ENCODE measurements at regions of chr7 and their contacts with region 1.

Region 1: GRCh38 chr7:44200647-44201461 is at the start of gene YKT6:
- DNase-seq: peak; percentile 65
- H3K4me3 ChIP-seq: peak within 1 kb of the TSS; percentile 100
- H3K27me3 ChIP-seq: no peaks in the 10 kb centered on the region; the same call in 1 of the 2 replicates
- CTCF ChIP-seq: peak; percentile 46
- polyA plus RNA-seq, gene YKT6: 132 and 160 TPM in 2 replicates

Region 2: GRCh38 chr7:44065436-44066118 is 135.3 kb before region 1 on chr7 and contains the start of gene PGAM2:
- CTCF ChIA-PET with region 1: interaction called, 52 read pairs
- POLR2A ChIA-PET with region 1: no interaction called
- DNase-seq: no peak
- H3K4me3 ChIP-seq: no peak within 1 kb of the TSS
- H3K27me3 ChIP-seq: no peaks in the 10 kb centered on the region
- CTCF ChIP-seq: no peak
- polyA plus RNA-seq, gene PGAM2: 0.16 TPM in 1 of 2 replicates, not detected in the other

Region 3: GRCh38 chr7:44072364-44073231 is 128.3 kb before region 1 on chr7:
- CTCF ChIA-PET with region 1: interaction called, 52 read pairs
- POLR2A ChIA-PET with region 1: no interaction called
- DNase-seq: peak; percentile 44
- H3K4me3 ChIP-seq: no peak overlapping the region
- H3K27me3 ChIP-seq: no peaks in the 10 kb centered on the region
- CTCF ChIP-seq: peak; percentile 92

Region 4: GRCh38 chr7:44123190-44124003 is 77.5 kb before region 1 on chr7 and contains the start of gene POLD2:
- CTCF ChIA-PET with region 1: interaction called, 12 read pairs
- POLR2A ChIA-PET with region 1: no interaction called
- DNase-seq: peak; percentile 77
- H3K4me3 ChIP-seq: peak within 1 kb of the TSS; percentile 80
- H3K27me3 ChIP-seq: no peaks in the 10 kb centered on the region
- CTCF ChIP-seq: no peak
- polyA plus RNA-seq, gene POLD2: 54.8 and 87.2 TPM in 2 replicates

Region 5: DNA sequence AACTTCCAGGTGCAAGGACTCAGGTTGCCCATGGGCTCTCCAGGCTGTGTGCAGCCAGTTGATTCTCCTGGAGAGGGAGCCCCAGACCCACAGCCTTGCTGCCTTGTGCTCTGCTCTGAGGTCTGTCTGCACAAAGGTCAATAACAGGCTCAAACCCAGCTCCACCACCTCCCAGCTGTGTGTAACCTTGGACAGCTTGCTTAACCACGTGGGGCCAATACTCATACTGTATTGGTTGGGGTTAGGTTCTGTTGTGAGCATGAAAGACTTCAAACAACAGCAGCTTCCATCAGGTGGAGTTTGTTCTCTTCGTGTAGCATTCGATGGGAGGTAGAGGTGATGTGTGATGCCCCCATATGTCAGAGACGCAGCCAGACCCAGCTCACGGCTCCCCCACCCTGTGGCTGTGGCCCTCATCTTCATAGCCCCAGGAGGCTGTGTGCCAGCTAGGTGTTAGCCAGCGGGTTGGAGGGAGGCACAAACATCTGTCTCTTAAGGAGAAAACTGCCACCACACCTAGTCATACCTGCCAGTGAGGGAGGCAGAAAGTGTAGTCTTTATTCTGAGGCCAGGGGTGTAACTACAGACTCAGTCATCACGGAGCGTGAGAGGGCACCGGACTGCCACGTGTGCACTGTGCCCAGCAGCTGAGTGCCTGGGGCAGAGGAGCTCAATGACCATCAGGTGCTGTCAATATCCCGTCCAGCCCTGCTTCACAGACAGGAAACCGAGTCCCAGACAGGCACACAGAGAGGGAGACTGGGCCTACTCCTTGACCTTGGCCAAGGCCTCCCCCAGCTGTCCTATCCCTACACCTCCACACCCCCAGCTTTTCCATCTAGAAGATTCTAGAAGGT is 69.5 kb before region 1 on chr7:
- CTCF ChIA-PET with region 1: interaction called, 27 read pairs
- POLR2A ChIA-PET with region 1: no interaction called
- DNase-seq: no peak
- H3K4me3 ChIP-seq: no peak overlapping the region
- H3K27me3 ChIP-seq: no peaks in the 10 kb centered on the region
- CTCF ChIP-seq: no peak

Region 6: DNA sequence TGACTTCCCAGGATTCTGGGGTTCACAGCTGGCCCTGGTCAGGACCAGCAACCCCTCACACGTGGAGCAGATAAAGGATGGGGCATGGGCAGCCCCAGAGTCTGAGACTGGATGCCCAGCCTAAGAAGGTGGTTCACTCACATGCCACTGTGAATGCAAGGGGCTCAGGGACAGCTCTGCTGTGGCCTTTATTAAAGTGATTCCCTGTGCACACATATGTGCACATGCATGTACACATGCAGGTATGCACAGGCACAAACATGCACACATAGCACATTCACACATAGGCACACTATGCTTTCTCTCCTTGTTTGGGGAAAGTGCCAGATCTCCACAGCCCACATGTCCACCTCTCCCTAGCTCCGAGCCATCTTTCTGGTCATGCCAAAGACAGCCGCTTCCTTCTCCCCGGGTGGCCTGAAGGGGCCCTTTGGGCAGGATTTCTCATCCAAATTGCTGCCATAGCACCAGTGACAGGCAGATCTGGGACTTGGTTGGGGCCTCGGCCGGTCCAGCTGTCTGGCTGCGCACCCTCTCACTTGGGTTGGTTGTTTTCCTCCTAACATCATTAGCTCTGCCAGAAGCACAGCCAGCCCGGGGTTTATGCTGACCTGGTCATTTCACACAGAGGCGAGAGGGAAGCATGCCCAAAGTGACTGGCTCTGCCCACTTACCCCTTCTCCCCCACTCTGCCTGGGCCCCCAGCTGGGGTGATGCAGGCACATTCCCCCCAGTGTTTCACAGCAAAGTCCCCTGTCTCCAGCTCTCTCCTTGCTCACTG is 13.0 kb before region 1 on chr7:
- CTCF ChIA-PET with region 1: interaction called, 21 read pairs
- POLR2A ChIA-PET with region 1: no interaction called
- DNase-seq: no peak
- H3K4me3 ChIP-seq: no peak overlapping the region
- H3K27me3 ChIP-seq: no peaks in the 10 kb centered on the region
- CTCF ChIP-seq: no peak

Region 7: DNA sequence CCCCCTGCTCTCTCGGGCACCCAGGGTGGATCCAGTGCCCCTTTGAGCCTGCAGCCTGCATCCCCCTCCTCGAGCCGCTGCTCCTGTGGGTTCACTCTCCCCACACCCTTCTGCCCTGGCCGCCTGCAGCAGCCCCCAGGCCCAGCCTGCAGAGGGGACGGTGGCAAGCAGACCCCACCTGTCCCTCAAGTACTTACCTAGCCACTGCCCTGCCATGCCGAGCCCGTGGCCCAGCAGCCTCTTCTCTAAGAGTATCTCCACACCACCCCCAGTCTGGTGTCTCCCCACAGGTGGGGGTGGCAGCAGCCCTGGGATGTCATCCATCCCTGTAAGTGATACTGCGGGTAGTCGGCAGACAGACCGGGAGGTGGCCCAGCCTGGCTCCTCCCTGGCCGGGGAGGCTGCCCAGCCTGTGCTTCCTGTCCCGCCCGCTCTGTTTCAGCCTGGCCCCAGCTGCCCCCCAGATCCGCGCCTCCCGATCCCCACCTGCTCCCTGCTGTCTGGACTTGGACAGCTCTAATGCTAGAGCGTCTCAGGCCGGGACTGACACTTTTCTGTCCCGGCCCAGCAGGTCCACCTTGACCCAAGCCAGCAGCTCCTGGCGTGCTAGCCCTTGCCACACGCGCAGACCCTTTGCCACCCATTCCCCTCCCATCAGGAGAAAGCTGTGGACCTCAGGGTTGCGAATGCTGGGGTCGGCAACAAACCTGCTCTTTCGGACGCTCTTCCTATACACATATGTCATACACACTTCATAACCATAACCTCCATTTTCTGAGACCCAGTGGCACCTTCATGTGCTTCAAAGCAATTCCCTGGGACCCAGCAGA is 24.9 kb after region 1 on chr7:
- CTCF ChIA-PET with region 1: no interaction called
- POLR2A ChIA-PET with region 1: no interaction called
- DNase-seq: no peak
- H3K4me3 ChIP-seq: no peak overlapping the region
- H3K27me3 ChIP-seq: peaks cover 15% of the 10 kb centered on the region
- CTCF ChIP-seq: no peak

Region 8: GRCh38 chr7:44431091-44431608 is 230.3 kb after region 1 on chr7:
- CTCF ChIA-PET with region 1: no interaction called
- POLR2A ChIA-PET with region 1: no interaction called
- DNase-seq: no peak
- H3K4me3 ChIP-seq: no peak overlapping the region
- H3K27me3 ChIP-seq: no peaks in the 10 kb centered on the region
- CTCF ChIP-seq: no peak